Psoas muscle (tissue), 8 donors: ENCODE measurements at regions of chr1 and their contacts with region 1.

Region 1: GRCh38 chr1:30111431-30111830 is 612.0 kb downstream of the MATN1 start:
- DNase-seq: peak in 1 of 2 donors; percentile 39
- ATAC-seq: peak; percentile 55 to 59 (median 57)
- H3K4me3 ChIP-seq: no peak overlapping the region
- H3K27ac ChIP-seq: no peak overlapping the region
- H3K4me1 ChIP-seq: no peaks in the 10 kb centered on the region
- H3K27me3 ChIP-seq: peaks cover 0 to 61% (median 10%) of the 10 kb centered on the region in 3 donors
- CTCF ChIP-seq: peak; percentile 42

Region 2: GRCh38 chr1:29259802-29260441 is 851.5 kb before region 1 on chr1:
- intact Hi-C with region 1: loop called in 1 of 2 experiments (anchors 10 kb)
- DNase-seq: peak; percentile 67 to 83
- ATAC-seq: peak; percentile 75 to 92 (median 86)
- H3K4me3 ChIP-seq: peak overlapping the region; percentile 70
- H3K27ac ChIP-seq: no peak overlapping the region
- H3K4me1 ChIP-seq: peaks cover 10% of the 10 kb centered on the region
- H3K27me3 ChIP-seq: peaks cover 0 to 2% (median 0%) of the 10 kb centered on the region in 3 donors
- CTCF ChIP-seq: no peak

Region 3: DNA sequence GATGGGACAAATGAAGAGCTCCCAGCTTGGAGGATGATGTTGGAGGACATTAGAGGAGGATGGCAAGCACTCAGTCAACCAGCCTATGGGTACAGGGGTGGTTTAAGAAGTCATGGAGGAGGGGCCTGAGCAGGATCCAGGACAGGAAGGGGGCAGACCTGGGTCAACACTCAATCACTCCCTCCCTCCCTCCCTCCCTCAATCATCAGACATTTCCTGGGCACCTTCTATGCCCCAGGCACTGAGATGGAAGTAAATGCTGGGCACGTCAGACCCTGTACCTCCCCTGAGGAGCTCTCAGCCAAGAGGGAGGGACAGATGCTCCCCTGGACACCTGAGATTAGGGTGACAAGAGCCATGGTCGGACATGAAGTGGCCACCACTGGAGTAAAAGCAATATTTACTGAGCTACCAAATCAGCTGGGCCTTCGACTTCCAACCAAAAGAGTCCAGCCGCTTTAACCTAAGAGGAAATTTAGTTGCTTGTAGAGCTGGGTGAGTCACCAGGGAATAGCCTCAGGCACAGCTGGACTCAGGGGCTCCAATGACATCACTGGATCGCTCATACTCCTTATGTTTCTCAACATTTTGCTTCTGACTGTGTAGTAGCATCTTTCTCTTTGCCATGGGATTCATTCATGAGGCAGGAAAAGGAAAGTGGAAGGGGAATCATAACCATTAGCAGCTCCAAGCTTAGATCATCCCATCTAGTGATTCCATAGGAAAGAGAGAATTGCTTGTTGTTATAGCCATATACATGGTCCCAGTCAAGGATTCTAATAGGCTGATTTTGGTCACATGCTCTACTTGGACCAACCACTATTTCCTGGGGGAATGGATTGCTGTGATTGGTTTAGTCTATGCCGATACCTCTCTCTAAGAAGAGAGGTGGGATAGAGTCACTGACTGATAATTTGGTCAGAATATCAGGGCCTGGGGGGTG is 52.5 kb before region 1 on chr1:
- intact Hi-C with region 1: no loop called
- DNase-seq: no peak
- ATAC-seq: no peak
- H3K4me3 ChIP-seq: no peak overlapping the region
- H3K27ac ChIP-seq: no peak overlapping the region
- H3K4me1 ChIP-seq: no peaks in the 10 kb centered on the region
- H3K27me3 ChIP-seq: peaks cover 0 to 42% (median 0%) of the 10 kb centered on the region in 3 donors
- CTCF ChIP-seq: no peak